ENCODE measurements at regions of chr7 and their contacts with region 1.

Region 1: GRCh38 chr7:11302121-11302520 is 328.4 kb downstream of the PHF14 start:
- DNase-seq: no peak
- ATAC-seq: no peak
- H3K4me3 ChIP-seq: no peak overlapping the region
- H3K27ac ChIP-seq: no peak overlapping the region
- H3K4me1 ChIP-seq: no peaks in the 10 kb centered on the region
- H3K27me3 ChIP-seq: no peaks in the 10 kb centered on the region
- CTCF ChIP-seq: no peak
- EP300 ChIP-seq: no peak
- POLR2A ChIP-seq: no peak
- RAD21 ChIP-seq: no peak

Region 2: DNA sequence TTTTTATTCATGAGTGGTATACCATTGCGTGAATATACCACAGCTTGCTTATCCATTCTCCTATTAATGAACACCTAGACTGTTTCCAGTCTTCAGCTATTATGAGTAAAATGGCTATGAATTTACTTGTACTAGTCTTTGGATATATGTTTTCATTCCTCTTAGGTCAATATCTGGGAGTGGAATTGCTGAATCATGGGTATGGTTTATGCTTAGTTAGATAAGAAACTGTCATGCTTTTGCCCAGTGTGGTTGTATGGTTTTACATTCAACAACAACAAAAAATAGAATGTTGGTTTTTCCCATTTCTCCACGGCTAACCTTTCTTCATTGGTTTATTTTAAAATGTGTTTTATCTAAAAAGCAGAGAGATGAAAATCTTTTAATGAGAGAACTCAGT is 20.2 kb before region 1 on chr7:
- CTCF ChIA-PET with region 1: no interaction called
- POLR2A ChIA-PET with region 1: no interaction called
- RAD21 ChIA-PET with region 1: no interaction called
- SMC1A ChIA-PET with region 1: no interaction called
- in situ Hi-C with region 1: no loop called
- intact Hi-C with region 1: loop called (anchors 2 kb)
- DNase-seq: no peak
- ATAC-seq: no peak
- H3K4me3 ChIP-seq: no peak overlapping the region
- H3K27ac ChIP-seq: no peak overlapping the region
- H3K4me1 ChIP-seq: no peaks in the 10 kb centered on the region
- H3K27me3 ChIP-seq: no peaks in the 10 kb centered on the region
- CTCF ChIP-seq: no peak
- EP300 ChIP-seq: no peak
- POLR2A ChIP-seq: no peak
- RAD21 ChIP-seq: no peak

Measured in GM12878 (cell line).